HEK293T (cell line): ENCODE measurements at regions of chrX and their contacts with region 1.

Region 1: GRCh38 chrX:139877710-139878414 is 55.0 kb downstream of the ATP11C start:
- DNase-seq: no peak

Region 2: DNA sequence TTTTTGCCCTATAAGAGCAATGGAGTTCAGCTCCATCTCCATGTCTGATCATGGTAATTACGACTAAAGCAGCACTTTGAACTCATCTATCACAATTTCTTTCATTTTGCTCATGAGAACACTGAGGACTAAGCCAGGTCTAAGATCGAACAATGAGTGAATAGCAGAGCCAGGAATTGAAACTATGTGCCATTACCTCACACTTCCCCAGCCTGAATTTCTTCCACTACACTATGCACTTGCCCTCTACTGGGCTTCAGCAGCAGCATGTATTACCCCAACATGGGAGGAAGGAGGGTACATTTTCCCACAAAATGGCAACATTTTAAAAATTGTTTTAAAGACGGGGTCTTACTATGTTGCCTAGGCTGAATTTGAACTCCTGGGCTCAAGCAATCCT is 891.6 kb before region 1 on chrX:
- CTCF ChIA-PET with region 1: no interaction called
- POLR2A ChIA-PET with region 1: no interaction called
- DNase-seq: no peak

Region 3: GRCh38 chrX:139890991-139891700 is 13.3 kb after region 1 on chrX:
- CTCF ChIA-PET with region 1: interaction called, 10 read pairs
- POLR2A ChIA-PET with region 1: no interaction called
- DNase-seq: no peak

Region 4: GRCh38 chrX:139945075-139945474 is 67.2 kb after region 1 on chrX:
- CTCF ChIA-PET with region 1: no interaction called
- POLR2A ChIA-PET with region 1: no interaction called
- DNase-seq: no peak